CD4-positive, alpha-beta memory T cell (primary cell): ENCODE measurements at regions of chr6 and their contacts with region 1.

Region 1: GRCh38 chr6:26240154-26241032 is 124.6 kb upstream of the BTN3A2 start:
- DNase-seq: peak; percentile 79 to 86 (median 82)
- H3K4me3 ChIP-seq: peak overlapping the region; percentile 66 to 67
- H3K4me3 Mint-ChIP-seq: peak overlapping the region; percentile 80 to 93 (median 87)
- H3K27ac ChIP-seq: peak overlapping the region; percentile 81
- H3K27ac Mint-ChIP-seq: peak overlapping the region; percentile 89 to 99 (median 95)
- H3K4me1 ChIP-seq: peaks cover 11% of the 10 kb centered on the region
- H3K4me1 Mint-ChIP-seq: peaks cover 9 to 29% (median 15%) of the 10 kb centered on the region in 4 donors
- H3K27me3 ChIP-seq: no peaks in the 10 kb centered on the region
- H3K27me3 Mint-ChIP-seq: no peaks in the 10 kb centered on the region

Region 2: DNA sequence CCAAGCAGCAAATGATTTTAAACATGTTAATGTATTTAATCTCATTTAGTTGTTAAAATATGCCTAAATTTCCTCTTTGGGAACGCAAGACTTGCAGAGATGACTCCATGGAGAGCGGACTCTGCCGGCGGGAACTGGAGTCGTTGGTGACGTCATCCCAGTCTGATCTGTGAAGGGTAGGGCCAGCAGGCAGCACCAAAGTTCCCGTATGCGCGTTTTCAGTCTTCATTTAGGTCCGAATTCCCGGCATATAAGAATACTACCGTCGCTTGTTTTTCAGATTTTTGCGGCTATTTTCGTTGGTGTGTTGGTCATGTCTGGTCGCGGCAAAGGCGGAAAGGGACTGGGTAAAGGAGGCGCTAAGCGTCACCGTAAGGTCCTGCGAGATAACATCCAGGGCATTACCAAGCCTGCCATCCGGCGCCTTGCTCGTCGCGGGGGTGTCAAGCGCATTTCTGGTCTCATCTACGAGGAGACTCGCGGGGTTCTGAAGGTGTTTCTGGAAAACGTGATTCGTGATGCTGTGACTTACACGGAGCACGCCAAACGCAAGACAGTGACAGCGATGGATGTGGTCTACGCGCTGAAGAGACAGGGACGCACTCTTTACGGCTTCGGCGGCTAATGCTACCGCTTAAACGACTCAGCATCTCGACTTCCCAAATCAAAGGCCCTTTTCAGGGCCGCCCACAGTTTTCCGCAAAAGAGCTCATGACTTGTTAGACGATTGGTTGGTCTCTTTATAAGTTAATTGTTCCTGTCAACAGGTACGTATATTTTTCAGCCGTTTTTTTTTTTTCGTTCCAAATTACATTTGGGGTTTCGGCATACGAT is 35.8 kb before region 1 on chr6:
- CTCF ChIA-PET with region 1: interaction called, 3 read pairs
- POLR2A ChIA-PET with region 1: interaction called, 502 read pairs
- intact Hi-C with region 1: loop called (anchors 1 kb)
- DNase-seq: peak; percentile 85 to 95 (median 89)
- H3K4me3 ChIP-seq: peak overlapping the region; percentile 48 to 87
- H3K4me3 Mint-ChIP-seq: no peak overlapping the region
- H3K27ac ChIP-seq: peak overlapping the region; percentile 82
- H3K27ac Mint-ChIP-seq: no peak overlapping the region
- H3K4me1 ChIP-seq: peaks cover 39% of the 10 kb centered on the region
- H3K4me1 Mint-ChIP-seq: peaks cover 8 to 26% (median 13%) of the 10 kb centered on the region in 4 donors
- H3K27me3 ChIP-seq: no peaks in the 10 kb centered on the region
- H3K27me3 Mint-ChIP-seq: peaks cover 0 to 3% of the 10 kb centered on the region in 2 donors

Region 3: GRCh38 chr6:26223650-26224546 is 16.5 kb before region 1 on chr6:
- CTCF ChIA-PET with region 1: interaction called, 13 read pairs
- POLR2A ChIA-PET with region 1: interaction called, 951 read pairs
- intact Hi-C with region 1: loop called (anchors 2 kb)
- DNase-seq: peak; percentile 74 to 87 (median 84)
- H3K4me3 ChIP-seq: peak overlapping the region; percentile 45 to 82
- H3K4me3 Mint-ChIP-seq: no peak overlapping the region
- H3K27ac ChIP-seq: peak overlapping the region; percentile 69
- H3K27ac Mint-ChIP-seq: no peak overlapping the region
- H3K4me1 ChIP-seq: peaks cover 21% of the 10 kb centered on the region
- H3K4me1 Mint-ChIP-seq: peaks cover 6 to 8% (median 7%) of the 10 kb centered on the region in 4 donors
- H3K27me3 ChIP-seq: no peaks in the 10 kb centered on the region
- H3K27me3 Mint-ChIP-seq: no peaks in the 10 kb centered on the region